ENCODE measurements at regions of chr7 and their contacts with region 1.

Region 1: DNA sequence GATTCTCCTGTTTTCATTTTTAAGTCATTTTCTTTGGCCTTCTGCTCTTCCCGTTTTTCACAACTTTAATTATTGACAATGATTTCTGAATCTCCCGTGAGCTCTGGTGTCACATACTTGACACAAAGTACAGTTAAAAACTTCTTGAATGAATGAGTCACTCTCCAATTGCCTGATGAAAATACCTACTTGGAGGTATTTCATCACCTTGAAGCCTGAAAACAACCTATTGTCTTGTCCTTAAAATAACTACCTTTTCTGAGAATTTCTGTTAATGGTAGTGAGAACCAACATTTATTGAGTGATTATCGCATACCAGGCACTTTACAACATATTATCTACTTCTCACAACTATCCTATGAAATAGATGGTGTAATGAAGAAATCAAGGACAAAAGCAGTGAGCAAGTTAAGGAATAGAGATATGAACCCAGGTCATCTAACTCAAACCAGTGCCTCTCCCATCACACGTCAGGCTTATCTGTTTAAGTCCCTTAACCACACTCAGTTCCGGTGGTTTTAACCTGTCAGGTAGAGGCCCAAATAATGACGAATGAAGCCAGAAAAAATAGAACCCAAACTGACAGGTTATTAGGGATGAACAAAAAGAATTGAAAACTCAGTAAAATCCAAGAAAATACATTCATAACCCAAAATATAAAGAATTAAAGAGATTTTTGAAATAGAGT is 11.6 kb downstream of the BET1 start:
- DNase-seq: no peak
- H3K4me3 Mint-ChIP-seq: no peak overlapping the region
- H3K27ac Mint-ChIP-seq: peak overlapping the region; percentile 58
- H3K4me1 Mint-ChIP-seq: peaks cover 11% of the 10 kb centered on the region
- H3K27me3 Mint-ChIP-seq: no peaks in the 10 kb centered on the region
- CTCF ChIP-seq: no peak

Region 2: GRCh38 chr7:93910076-93910994 is 82.2 kb before region 1 on chr7:
- CTCF ChIA-PET with region 1: no interaction called
- intact Hi-C with region 1: loop called (anchors 5 kb)
- DNase-seq: no peak
- H3K4me3 Mint-ChIP-seq: no peak overlapping the region
- H3K27ac Mint-ChIP-seq: no peak overlapping the region
- H3K4me1 Mint-ChIP-seq: peaks cover 28% of the 10 kb centered on the region
- H3K27me3 Mint-ChIP-seq: no peaks in the 10 kb centered on the region
- CTCF ChIP-seq: no peak